ENCODE measurements at regions of chr5 and their contacts with region 1.

Region 1: GRCh38 chr5:138789771-138790242 is 36.6 kb downstream of the CTNNA1 start:
- DNase-seq: peak; percentile 10
- ATAC-seq: no peak
- H3K4me3 Mint-ChIP-seq: no peak overlapping the region
- H3K27ac Mint-ChIP-seq: no peak overlapping the region
- H3K4me1 Mint-ChIP-seq: peaks cover 21% of the 10 kb centered on the region
- H3K27me3 Mint-ChIP-seq: peaks cover 47% of the 10 kb centered on the region

Region 2: GRCh38 chr5:138597665-138598400 is 192.0 kb before region 1 on chr5:
- CTCF ChIA-PET with region 1: no interaction called
- POLR2A ChIA-PET with region 1: no interaction called
- intact Hi-C with region 1: no loop called
- DNase-seq: no peak
- ATAC-seq: no peak
- H3K4me3 Mint-ChIP-seq: no peak overlapping the region
- H3K27ac Mint-ChIP-seq: no peak overlapping the region
- H3K4me1 Mint-ChIP-seq: peaks cover 11% of the 10 kb centered on the region
- H3K27me3 Mint-ChIP-seq: peaks cover 38% of the 10 kb centered on the region

Region 3: DNA sequence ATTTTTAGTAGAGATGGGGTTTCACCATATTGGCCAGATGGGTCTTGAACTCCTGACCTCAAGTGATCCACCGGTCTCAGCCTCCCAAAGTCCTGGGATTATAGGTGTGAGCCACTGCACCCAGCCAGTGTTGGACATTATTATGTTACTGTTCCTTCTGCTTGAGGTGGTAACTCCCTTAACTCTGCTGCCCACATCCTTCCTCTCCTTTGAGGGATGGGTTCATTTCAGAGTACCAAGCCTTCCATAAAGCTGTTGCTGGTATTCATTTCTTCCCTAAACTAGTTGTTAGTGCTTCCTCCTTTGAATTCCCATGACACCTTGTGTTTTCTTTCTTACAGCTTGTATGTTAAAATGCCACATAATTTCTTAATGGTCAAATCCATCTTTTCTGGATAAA is 17.4 kb after region 1 on chr5:
- CTCF ChIA-PET with region 1: interaction called, 12 read pairs
- POLR2A ChIA-PET with region 1: interaction called, 3 read pairs
- intact Hi-C with region 1: no loop called
- DNase-seq: no peak
- ATAC-seq: no peak
- H3K4me3 Mint-ChIP-seq: no peak overlapping the region
- H3K27ac Mint-ChIP-seq: no peak overlapping the region
- H3K4me1 Mint-ChIP-seq: peaks cover 5% of the 10 kb centered on the region
- H3K27me3 Mint-ChIP-seq: peaks cover 9% of the 10 kb centered on the region

Region 4: GRCh38 chr5:138819081-138819480 is 29.3 kb after region 1 on chr5:
- CTCF ChIA-PET with region 1: interaction called, 10 read pairs
- POLR2A ChIA-PET with region 1: no interaction called
- intact Hi-C with region 1: no loop called
- DNase-seq: no peak
- ATAC-seq: no peak
- H3K4me3 Mint-ChIP-seq: no peak overlapping the region
- H3K27ac Mint-ChIP-seq: no peak overlapping the region
- H3K4me1 Mint-ChIP-seq: no peaks in the 10 kb centered on the region
- H3K27me3 Mint-ChIP-seq: peaks cover 9% of the 10 kb centered on the region

Region 5: DNA sequence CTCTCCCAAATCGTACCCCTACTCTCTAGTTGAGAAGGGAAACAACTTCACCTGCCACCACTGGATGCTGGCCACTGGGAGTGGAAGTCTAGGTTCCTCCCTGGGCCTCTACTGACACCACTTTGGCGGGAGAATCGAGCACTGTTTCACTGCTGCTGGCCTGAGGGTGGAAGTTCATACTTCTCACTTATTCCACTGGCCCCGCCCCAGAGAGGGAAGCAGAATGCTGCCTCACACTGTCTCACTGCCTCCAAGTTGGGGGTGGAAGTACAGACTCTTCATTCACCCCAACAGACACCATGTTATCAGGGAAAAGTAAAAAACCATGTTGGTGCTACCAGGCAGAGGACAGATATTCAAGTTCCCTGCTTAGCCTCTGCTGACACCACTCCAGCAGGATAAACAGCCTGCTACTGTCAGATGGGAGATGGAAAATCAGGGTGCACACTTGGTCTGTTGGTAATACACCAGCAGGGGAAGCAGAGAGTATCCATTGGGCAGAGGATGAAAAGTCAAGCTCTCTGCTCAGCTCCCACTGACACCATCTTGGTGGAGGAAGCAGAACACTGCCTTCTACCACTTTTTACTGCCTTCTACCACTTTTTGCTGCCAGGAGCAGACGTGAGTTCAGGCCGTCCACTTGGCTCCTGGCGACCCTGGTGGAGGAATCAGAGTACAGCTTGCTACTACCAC is 249.0 kb after region 1 on chr5:
- CTCF ChIA-PET with region 1: no interaction called
- POLR2A ChIA-PET with region 1: no interaction called
- intact Hi-C with region 1: no loop called
- DNase-seq: no peak
- ATAC-seq: no peak
- H3K4me3 Mint-ChIP-seq: no peak overlapping the region
- H3K27ac Mint-ChIP-seq: no peak overlapping the region
- H3K4me1 Mint-ChIP-seq: no peaks in the 10 kb centered on the region
- H3K27me3 Mint-ChIP-seq: peaks cover 4% of the 10 kb centered on the region

Measured in activated CD4-positive, alpha-beta T cell treated with anti-CD3 and anti-CD28 coated beads for 36 hours (primary cell).